Endothelial cell of umbilical vein (primary cell): ENCODE measurements at regions of chr2 and their contacts with region 1.

Region 1: GRCh38 chr2:173851141-173851641 is 114.0 kb downstream of the SP3 start:
- DNase-seq: no peak
- H3K4me3 ChIP-seq: no peak overlapping the region
- H3K27ac ChIP-seq: no peak overlapping the region
- H3K4me1 ChIP-seq: no peaks in the 10 kb centered on the region
- H3K27me3 ChIP-seq: peaks cover 2 to 4% of the 10 kb centered on the region in 2 experiments
- CTCF ChIP-seq: no peak
- POLR2A ChIP-seq: no peak

Region 2: GRCh38 chr2:173874894-173875237 is 23.7 kb after region 1 on chr2:
- CTCF ChIA-PET with region 1: no interaction called
- POLR2A ChIA-PET with region 1: no interaction called
- dilution Hi-C with region 1: no loop called
- intact Hi-C with region 1: loop called (anchors 1 kb)
- DNase-seq: no peak
- H3K4me3 ChIP-seq: no peak overlapping the region
- H3K27ac ChIP-seq: no peak overlapping the region
- H3K4me1 ChIP-seq: no peaks in the 10 kb centered on the region
- H3K27me3 ChIP-seq: peaks cover 10% of the 10 kb centered on the region in 2 experiments
- CTCF ChIP-seq: no peak
- POLR2A ChIP-seq: no peak